ENCODE measurements at regions of chr18 and their contacts with region 1.

Region 1: DNA sequence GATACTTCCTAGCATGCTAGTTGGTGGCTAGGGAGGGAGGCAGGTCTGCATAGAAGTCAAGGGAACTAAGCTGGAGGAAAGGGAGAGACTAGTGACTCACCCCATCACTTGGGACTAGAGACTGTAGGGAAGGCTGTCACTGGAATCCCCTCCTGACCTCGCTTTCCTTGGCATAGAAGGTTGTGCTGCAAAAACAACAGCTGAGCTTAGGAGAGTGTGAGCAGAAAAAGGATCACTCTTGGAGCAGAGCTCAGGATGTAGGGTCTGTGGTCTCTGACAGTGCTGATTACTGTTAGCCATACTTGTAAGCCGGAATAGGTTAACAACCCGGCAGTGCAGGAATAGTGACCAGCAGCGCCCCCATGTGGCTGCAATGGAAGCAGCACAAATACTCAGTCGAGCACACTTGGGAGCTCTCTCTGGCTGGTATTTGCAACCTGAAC is 66.9 kb upstream of the SMAD2 start:
- DNase-seq: peak; percentile 85
- ATAC-seq: peak; percentile 95
- H3K4me3 Mint-ChIP-seq: no peak overlapping the region
- H3K27ac Mint-ChIP-seq: no peak overlapping the region
- H3K4me1 Mint-ChIP-seq: peaks cover 14% of the 10 kb centered on the region
- H3K27me3 Mint-ChIP-seq: no peaks in the 10 kb centered on the region
- CTCF ChIP-seq: peak; percentile 83

Region 2: GRCh38 chr18:47772374-47773248 is 224.7 kb before region 1 on chr18:
- CTCF ChIA-PET with region 1: interaction called, 43 read pairs
- POLR2A ChIA-PET with region 1: no interaction called
- DNase-seq: peak; percentile 91
- ATAC-seq: peak; percentile 92
- H3K4me3 Mint-ChIP-seq: no peak overlapping the region
- H3K27ac Mint-ChIP-seq: no peak overlapping the region
- H3K4me1 Mint-ChIP-seq: peaks cover 9% of the 10 kb centered on the region
- H3K27me3 Mint-ChIP-seq: no peaks in the 10 kb centered on the region; the same call in 1 of the 2 replicates
- CTCF ChIP-seq: peak; percentile 95

Region 3: GRCh38 chr18:47901624-47902362 is 95.6 kb before region 1 on chr18:
- CTCF ChIA-PET with region 1: interaction called, 10 read pairs
- POLR2A ChIA-PET with region 1: no interaction called
- DNase-seq: no peak
- ATAC-seq: peak; percentile 59
- H3K4me3 Mint-ChIP-seq: no peak overlapping the region
- H3K27ac Mint-ChIP-seq: 0 out of 2 replicates have a peak overlapping the region, but pooled peaks have one; percentile 10
- H3K4me1 Mint-ChIP-seq: peaks cover 80% of the 10 kb centered on the region
- H3K27me3 Mint-ChIP-seq: no peaks in the 10 kb centered on the region
- CTCF ChIP-seq: no peak

Region 4: DNA sequence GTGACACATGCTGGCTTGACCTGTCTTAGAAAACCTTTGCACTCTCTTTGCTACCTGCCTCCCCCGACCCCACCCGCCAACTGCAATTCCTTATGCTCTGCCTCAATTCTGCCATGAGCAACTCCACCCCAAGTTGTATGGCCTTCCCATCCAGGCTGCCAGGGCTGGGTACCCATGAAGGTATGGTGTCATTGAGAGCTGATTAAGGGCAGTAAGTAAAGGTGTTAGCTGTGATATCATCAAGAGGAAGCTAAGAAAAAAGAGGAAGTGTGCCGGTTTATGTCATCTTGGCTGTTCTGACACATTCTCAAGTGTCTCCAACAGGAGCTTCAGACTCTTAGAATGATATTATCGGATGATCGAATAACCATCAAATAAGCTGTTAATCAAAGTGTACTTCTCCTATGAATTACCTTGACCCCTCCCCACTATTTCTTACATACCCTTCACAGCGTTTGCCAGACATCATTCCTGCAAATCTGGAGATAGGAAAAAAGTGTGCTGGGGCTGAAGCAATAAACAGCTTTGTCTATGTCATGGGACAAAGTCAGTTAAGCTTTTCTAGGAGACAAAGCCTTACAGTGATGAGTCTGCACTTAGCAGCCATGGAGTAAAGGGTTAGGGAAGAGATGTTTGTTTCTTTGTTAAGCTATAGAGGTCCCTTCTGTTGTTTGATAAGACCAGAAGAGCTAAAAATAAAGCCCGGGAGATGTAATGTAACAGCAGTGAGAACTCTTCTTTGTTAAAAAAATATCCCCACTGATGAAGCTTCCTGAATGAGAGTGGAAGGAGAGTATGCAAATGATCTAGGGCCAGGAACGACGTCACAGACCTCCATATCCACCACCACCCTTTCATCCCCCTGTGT is 26.5 kb before region 1 on chr18:
- CTCF ChIA-PET with region 1: interaction called, 30 read pairs
- POLR2A ChIA-PET with region 1: no interaction called
- DNase-seq: no peak
- ATAC-seq: no peak
- H3K4me3 Mint-ChIP-seq: no peak overlapping the region
- H3K27ac Mint-ChIP-seq: no peak overlapping the region
- H3K4me1 Mint-ChIP-seq: peaks cover 58% of the 10 kb centered on the region
- H3K27me3 Mint-ChIP-seq: peaks cover 3% of the 10 kb centered on the region; the same call in 1 of the 2 replicates
- CTCF ChIP-seq: no peak

Region 5: DNA sequence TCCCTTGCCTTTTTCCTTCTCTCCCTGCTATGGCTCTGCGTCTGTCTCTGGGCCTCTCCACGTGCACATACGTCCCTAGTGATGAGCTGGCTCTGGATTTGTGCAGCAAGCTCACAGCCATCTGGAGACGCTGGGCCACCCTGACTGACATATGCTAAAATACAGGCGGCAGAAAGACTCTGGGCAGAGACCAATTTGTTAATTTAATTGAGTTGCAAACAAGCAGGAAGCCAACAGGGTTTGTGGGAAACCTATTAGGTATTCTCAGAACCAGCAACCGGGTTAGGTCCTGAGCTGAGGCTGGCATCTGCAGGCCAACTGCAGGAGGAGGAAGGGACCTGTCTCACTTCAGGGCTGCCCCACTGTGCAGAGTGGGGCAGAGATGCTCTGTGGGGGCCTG is 13.4 kb before region 1 on chr18:
- CTCF ChIA-PET with region 1: interaction called, 16 read pairs
- POLR2A ChIA-PET with region 1: no interaction called
- DNase-seq: no peak
- ATAC-seq: no peak; the same call in 1 of the 2 replicates
- H3K4me3 Mint-ChIP-seq: no peak overlapping the region
- H3K27ac Mint-ChIP-seq: peak overlapping the region; percentile 78; the same call in 1 of the 2 replicates
- H3K4me1 Mint-ChIP-seq: peaks cover 35% of the 10 kb centered on the region
- H3K27me3 Mint-ChIP-seq: peaks cover 4% of the 10 kb centered on the region; the same call in 1 of the 2 replicates
- CTCF ChIP-seq: no peak

Region 6: GRCh38 chr18:48007955-48008701 is 10.8 kb after region 1 on chr18:
- CTCF ChIA-PET with region 1: interaction called, 55 read pairs
- POLR2A ChIA-PET with region 1: no interaction called
- DNase-seq: peak; percentile 87
- ATAC-seq: peak; percentile 92
- H3K4me3 Mint-ChIP-seq: peak overlapping the region; percentile 73
- H3K27ac Mint-ChIP-seq: peak overlapping the region; percentile 89
- H3K4me1 Mint-ChIP-seq: peaks cover 30% of the 10 kb centered on the region
- H3K27me3 Mint-ChIP-seq: peaks cover 22% of the 10 kb centered on the region
- CTCF ChIP-seq: peak; percentile 73